ENCODE measurements at regions of chr17 and their contacts with region 1.

Region 1: GRCh38 chr17:74864866-74865395 is 5.2 kb upstream of the GRIN2C start:
- DNase-seq: peak in 2 of 3 donors; percentile 68 to 74
- ATAC-seq: peak; percentile 62 to 79 (median 74)
- H3K4me3 ChIP-seq: no peak overlapping the region
- H3K27ac ChIP-seq: no peak overlapping the region
- H3K4me1 ChIP-seq: peaks cover 0 to 7% (median 2%) of the 10 kb centered on the region in 4 donors
- H3K27me3 ChIP-seq: peaks cover 4 to 17% of the 10 kb centered on the region in 2 donors
- CTCF ChIP-seq: peak; percentile 90 to 93 (median 93)
- POLR2A ChIP-seq: no peak

Region 2: GRCh38 chr17:74659898-74660297 is 205.0 kb before region 1 on chr17:
- intact Hi-C with region 1: loop called (anchors 10 kb)
- DNase-seq: peak in 1 of 3 donors; percentile 18
- ATAC-seq: no peak
- H3K4me3 ChIP-seq: no peak overlapping the region
- H3K27ac ChIP-seq: no peak overlapping the region
- H3K4me1 ChIP-seq: no peaks in the 10 kb centered on the region
- H3K27me3 ChIP-seq: no peaks in the 10 kb centered on the region
- CTCF ChIP-seq: no peak
- POLR2A ChIP-seq: no peak

Region 3: GRCh38 chr17:74748529-74749365 is 116.2 kb before region 1 on chr17 and contains the start of gene NHERF1:
- intact Hi-C with region 1: loop called in 1 of 2 experiments (anchors 10 kb)
- DNase-seq: peak; percentile 97
- ATAC-seq: peak; percentile 63 to 85 (median 71)
- H3K4me3 ChIP-seq: peak within 1 kb of the TSS; percentile 98 to 100 (median 99)
- H3K27ac ChIP-seq: peak within 1 kb of the TSS; percentile 72 to 84 (median 80)
- H3K4me1 ChIP-seq: peaks cover 0 to 45% (median 21%) of the 10 kb centered on the region in 4 donors
- H3K27me3 ChIP-seq: no peaks in the 10 kb centered on the region
- CTCF ChIP-seq: peak in 1 of 4 donors; percentile 17
- POLR2A ChIP-seq: peak; percentile 99
- total RNA-seq, gene NHERF1: 105 to 218 (median 161) TPM

Region 4: DNA sequence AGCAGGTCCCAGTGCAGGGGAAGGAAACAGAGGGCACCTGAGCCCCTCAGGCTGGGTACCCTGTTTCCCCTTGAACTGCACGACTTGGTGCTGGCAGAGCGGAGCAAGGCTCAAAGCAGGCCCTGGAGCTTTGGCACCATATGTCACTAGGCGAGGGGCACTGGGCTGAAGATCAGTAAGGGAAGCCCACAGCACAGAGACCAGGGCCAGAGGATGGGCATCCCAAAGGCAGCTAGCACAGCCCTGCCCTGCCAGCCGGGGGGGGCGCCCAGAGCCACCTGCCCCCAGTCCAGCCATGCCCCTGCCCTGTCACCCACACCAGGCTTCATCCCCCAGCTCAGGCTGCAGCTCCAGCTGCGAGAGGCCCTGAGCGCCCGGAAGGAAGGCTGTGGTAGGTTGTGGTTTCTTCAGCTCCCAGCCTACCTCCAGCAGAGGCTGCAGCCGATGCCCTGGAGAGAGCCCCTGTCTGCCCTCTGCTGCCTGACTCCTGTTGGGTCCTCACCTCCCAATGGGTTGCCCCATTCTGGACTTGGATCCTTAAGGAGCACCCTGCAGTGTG is 105.6 kb before region 1 on chr17:
- intact Hi-C with region 1: no loop called
- DNase-seq: no peak
- ATAC-seq: no peak
- H3K4me3 ChIP-seq: no peak overlapping the region
- H3K27ac ChIP-seq: peak overlapping the region in 1 of 3 donors; percentile 44
- H3K4me1 ChIP-seq: peaks cover 2 to 97% (median 50%) of the 10 kb centered on the region in 4 donors
- H3K27me3 ChIP-seq: no peaks in the 10 kb centered on the region
- CTCF ChIP-seq: no peak
- POLR2A ChIP-seq: no peak

Region 5: GRCh38 chr17:74785096-74785980 is 79.6 kb before region 1 on chr17:
- intact Hi-C with region 1: loop called in 1 of 2 experiments (anchors 5 kb)
- DNase-seq: no peak
- ATAC-seq: peak in 1 of 4 donors; percentile 20
- H3K4me3 ChIP-seq: no peak overlapping the region
- H3K27ac ChIP-seq: no peak overlapping the region
- H3K4me1 ChIP-seq: no peaks in the 10 kb centered on the region
- H3K27me3 ChIP-seq: no peaks in the 10 kb centered on the region
- CTCF ChIP-seq: no peak
- POLR2A ChIP-seq: no peak

Region 6: GRCh38 chr17:75010683-75011395 is 145.9 kb after region 1 on chr17:
- intact Hi-C with region 1: no loop called
- DNase-seq: peak in 1 of 3 donors; percentile 19
- ATAC-seq: no peak
- H3K4me3 ChIP-seq: no peak overlapping the region
- H3K27ac ChIP-seq: no peak overlapping the region
- H3K4me1 ChIP-seq: peaks cover 0 to 13% (median 4%) of the 10 kb centered on the region in 4 donors
- H3K27me3 ChIP-seq: no peaks in the 10 kb centered on the region
- CTCF ChIP-seq: no peak
- POLR2A ChIP-seq: no peak